HepG2 (cell line): ENCODE measurements at regions of chr18 and their contacts with region 1.

Region 1: GRCh38 chr18:72544092-72544886 is at the start of gene CBLN2:
- DNase-seq: peak; percentile 23
- ATAC-seq: peak; percentile 100
- H3K4me3 ChIP-seq: no peak within 1 kb of the TSS
- H3K27ac ChIP-seq: no peak within 1 kb of the TSS
- H3K4me1 ChIP-seq: no peaks in the 10 kb centered on the region
- H3K27me3 ChIP-seq: peaks cover 1 to 19% of the 10 kb centered on the region in 2 experiments; a peak in 3 of 5 replicates
- CTCF ChIP-seq: peak; percentile 88
- EP300 ChIP-seq: no peak
- POLR2A ChIP-seq: no peak
- RAD21 ChIP-seq: peak; percentile 85
- total RNA-seq, gene CBLN2: not detected in 2 replicates

Region 2: GRCh38 chr18:70598406-70598805 is 1945.9 kb before region 1 on chr18:
- CTCF ChIA-PET with region 1: interaction called, 3 read pairs
- POLR2A ChIA-PET with region 1: no interaction called
- in situ Hi-C with region 1: no loop called
- intact Hi-C with region 1: loop called (anchors 2 kb)
- DNase-seq: no peak
- ATAC-seq: peak; percentile 38; the same call in 1 of the 3 replicates
- H3K4me3 ChIP-seq: no peak overlapping the region
- H3K27ac ChIP-seq: no peak overlapping the region
- H3K4me1 ChIP-seq: no peaks in the 10 kb centered on the region
- H3K27me3 ChIP-seq: no peaks in the 10 kb centered on the region
- CTCF ChIP-seq: no peak
- EP300 ChIP-seq: no peak
- POLR2A ChIP-seq: no peak
- RAD21 ChIP-seq: no peak

Region 3: GRCh38 chr18:70931942-70932814 is 1612.1 kb before region 1 on chr18:
- CTCF ChIA-PET with region 1: interaction called, 8 read pairs
- POLR2A ChIA-PET with region 1: no interaction called
- in situ Hi-C with region 1: loop called (anchors 10 kb)
- intact Hi-C with region 1: no loop called
- DNase-seq: peak; percentile 3
- ATAC-seq: peak; percentile 48; the same call in 1 of the 3 replicates
- H3K4me3 ChIP-seq: no peak overlapping the region
- H3K27ac ChIP-seq: no peak overlapping the region
- H3K4me1 ChIP-seq: no peaks in the 10 kb centered on the region
- H3K27me3 ChIP-seq: no peaks in the 10 kb centered on the region; a peak in 1 of 5 replicates
- CTCF ChIP-seq: peak; percentile 53
- EP300 ChIP-seq: no peak
- POLR2A ChIP-seq: no peak
- RAD21 ChIP-seq: no peak

Region 4: DNA sequence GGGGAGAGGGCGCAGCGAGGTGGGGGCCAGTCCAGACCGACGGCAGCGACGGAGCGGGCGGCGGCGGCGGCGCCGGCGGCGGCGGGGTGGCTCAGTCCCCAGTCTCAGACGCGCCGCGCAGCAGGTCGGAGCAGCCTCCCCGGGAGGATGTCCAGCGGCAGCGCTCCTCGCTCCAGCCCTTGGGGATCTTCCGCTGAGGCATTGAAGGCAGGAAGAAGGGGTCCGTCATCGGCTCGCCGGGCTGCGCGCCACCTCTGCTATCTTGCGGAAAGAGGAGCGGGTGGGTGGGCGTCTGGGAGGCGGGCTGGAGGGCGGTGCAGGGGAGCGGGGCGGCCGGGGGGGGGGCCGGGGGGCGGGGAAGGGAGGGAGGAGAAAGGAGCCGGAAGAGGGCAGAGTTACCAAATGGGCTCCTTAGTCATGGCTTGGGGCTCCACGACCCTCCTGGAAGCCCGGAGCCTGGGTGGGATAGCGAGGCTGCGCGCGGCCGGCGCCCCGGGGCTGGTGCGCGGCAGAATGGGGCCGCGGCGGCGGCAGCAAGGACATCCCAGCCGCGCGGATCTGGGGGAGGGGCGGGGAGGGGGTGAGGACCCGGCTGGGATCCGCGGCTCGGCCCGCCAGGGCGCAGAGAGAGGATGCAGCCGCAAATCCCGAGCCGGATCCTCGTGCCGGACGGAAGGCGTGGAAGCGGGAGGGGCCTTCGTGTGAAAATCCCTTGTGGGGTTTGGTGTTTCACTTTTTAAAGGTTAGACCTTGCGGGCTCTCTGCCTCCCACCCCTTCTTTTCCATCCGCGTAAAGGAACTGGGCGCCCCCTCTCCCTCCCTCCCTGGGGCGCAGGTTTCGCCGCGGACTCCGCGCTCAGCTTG is 323.7 kb after region 1 on chr18 and contains the start of gene NETO1:
- CTCF ChIA-PET with region 1: no interaction called
- POLR2A ChIA-PET with region 1: no interaction called
- in situ Hi-C with region 1: no loop called
- intact Hi-C with region 1: no loop called
- DNase-seq: no peak
- ATAC-seq: no peak
- H3K4me3 ChIP-seq: no peak within 1 kb of the TSS
- H3K27ac ChIP-seq: no peak within 1 kb of the TSS
- H3K4me1 ChIP-seq: no peaks in the 10 kb centered on the region
- H3K27me3 ChIP-seq: no peaks in the 10 kb centered on the region
- CTCF ChIP-seq: no peak
- EP300 ChIP-seq: no peak
- POLR2A ChIP-seq: no peak
- RAD21 ChIP-seq: no peak
- total RNA-seq, gene NETO1: not detected in 2 replicates